A673 (cell line): ENCODE measurements at regions of chr1 and their contacts with region 1.

Region 1: GRCh38 chr1:30253807-30254440 is 469.5 kb downstream of the MATN1 start:
- DNase-seq: peak; percentile 73
- H3K4me3 ChIP-seq: no peak overlapping the region
- H3K27ac ChIP-seq: peak overlapping the region; percentile 100
- H3K4me1 ChIP-seq: peaks cover 94% of the 10 kb centered on the region
- H3K27me3 ChIP-seq: no peaks in the 10 kb centered on the region
- CTCF ChIP-seq: no peak

Region 2: DNA sequence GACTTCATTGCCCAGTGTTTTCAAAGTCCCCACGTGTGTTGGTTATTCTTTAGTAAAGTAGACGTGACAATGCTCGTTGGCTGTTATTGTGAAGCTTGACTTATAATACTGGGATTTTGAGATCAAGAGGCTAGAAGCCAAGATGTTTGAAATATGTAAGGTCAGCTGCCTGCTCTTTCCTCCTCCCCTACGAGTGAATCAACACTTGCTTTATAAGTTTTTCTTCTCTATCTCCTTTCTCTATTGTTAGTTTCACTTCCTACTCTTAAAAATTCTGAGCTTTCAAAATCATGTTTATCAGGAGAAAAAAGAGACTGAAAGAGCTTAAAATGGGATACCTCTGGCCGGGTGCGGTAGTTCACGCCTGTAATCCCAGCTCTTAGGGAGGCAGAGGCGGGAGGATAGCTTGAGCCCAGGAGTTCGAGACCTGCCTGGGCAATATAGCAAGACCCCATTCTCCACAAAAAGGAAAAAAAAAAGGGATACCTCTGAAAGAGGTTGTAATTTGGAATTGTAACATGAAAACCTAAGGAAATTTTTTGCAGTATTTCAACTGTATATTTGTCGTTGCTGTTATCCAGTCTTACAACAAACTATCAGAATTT is 1267.5 kb before region 1 on chr1:
- CTCF ChIA-PET with region 1: no interaction called
- POLR2A ChIA-PET with region 1: no interaction called
- intact Hi-C with region 1: loop called (anchors 2 kb)
- DNase-seq: peak; percentile 28
- H3K4me3 ChIP-seq: peak overlapping the region; percentile 24
- H3K27ac ChIP-seq: peak overlapping the region; percentile 96
- H3K4me1 ChIP-seq: peaks cover 65% of the 10 kb centered on the region
- H3K27me3 ChIP-seq: no peaks in the 10 kb centered on the region
- CTCF ChIP-seq: no peak

Region 3: GRCh38 chr1:29849038-29849750 is 404.7 kb before region 1 on chr1:
- CTCF ChIA-PET with region 1: no interaction called
- POLR2A ChIA-PET with region 1: no interaction called
- intact Hi-C with region 1: loop called (anchors 10 kb)
- DNase-seq: peak; percentile 68
- H3K4me3 ChIP-seq: no peak overlapping the region
- H3K27ac ChIP-seq: no peak overlapping the region
- H3K4me1 ChIP-seq: no peaks in the 10 kb centered on the region
- H3K27me3 ChIP-seq: no peaks in the 10 kb centered on the region
- CTCF ChIP-seq: peak; percentile 80

Region 4: DNA sequence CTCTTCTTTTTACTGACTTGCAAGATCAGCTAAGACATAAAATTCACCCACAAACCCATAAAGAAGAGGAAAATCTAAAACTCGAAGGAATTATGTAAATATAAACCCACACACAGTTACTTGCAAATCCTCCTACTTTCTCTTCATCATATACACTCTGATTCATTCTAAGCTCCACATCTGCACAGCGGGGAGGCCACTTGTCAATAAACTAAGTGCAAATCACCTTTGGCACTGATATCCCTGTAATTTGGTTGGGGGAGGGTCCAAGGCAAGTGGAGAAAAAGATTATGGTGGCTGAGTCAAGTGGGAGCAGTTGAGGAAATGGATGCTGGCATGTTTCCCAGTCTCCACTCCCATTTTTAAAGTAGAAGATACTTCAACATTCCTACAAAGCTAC is 127.1 kb before region 1 on chr1:
- CTCF ChIA-PET with region 1: no interaction called
- POLR2A ChIA-PET with region 1: no interaction called
- intact Hi-C with region 1: loop called (anchors 5 kb)
- DNase-seq: peak; percentile 85
- H3K4me3 ChIP-seq: no peak overlapping the region
- H3K27ac ChIP-seq: peak overlapping the region; percentile 20
- H3K4me1 ChIP-seq: peaks cover 29% of the 10 kb centered on the region
- H3K27me3 ChIP-seq: no peaks in the 10 kb centered on the region
- CTCF ChIP-seq: no peak

Region 5: DNA sequence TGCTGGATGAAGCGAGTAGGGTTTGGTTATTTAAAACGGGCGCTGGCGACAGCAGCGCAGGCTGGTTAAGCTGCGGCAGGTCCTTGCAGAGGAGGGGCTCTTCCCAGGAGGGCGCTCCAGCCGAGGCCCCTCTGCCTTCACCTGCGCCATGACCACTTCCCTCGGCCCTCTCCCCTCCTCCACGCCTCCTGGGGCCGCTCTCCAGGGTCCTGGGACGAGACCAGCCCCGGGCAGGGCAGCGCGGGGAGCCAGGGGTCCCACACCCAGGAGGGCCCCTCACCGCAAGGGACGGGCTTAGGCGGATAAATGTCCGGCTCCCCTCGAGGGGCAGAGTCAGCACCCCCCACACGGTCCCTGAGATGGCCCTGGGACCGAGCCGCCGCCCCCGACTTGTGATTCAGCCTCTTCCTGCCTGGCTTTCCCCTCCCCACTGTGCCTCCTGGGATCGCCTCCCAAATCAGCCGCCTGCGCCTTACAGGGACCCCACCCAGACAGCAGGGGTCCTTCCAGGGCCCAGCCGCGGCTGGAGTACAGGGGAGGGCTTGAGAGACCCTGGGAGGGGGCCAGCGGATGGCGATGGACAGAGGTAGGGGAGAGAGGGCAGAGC is 88.7 kb after region 1 on chr1:
- CTCF ChIA-PET with region 1: no interaction called
- POLR2A ChIA-PET with region 1: no interaction called
- intact Hi-C with region 1: loop called (anchors 10 kb)
- DNase-seq: no peak
- H3K4me3 ChIP-seq: no peak overlapping the region
- H3K27ac ChIP-seq: no peak overlapping the region
- H3K4me1 ChIP-seq: peaks cover 15% of the 10 kb centered on the region
- H3K27me3 ChIP-seq: no peaks in the 10 kb centered on the region
- CTCF ChIP-seq: no peak